Lower lobe of right lung (tissue), 2 donors: ENCODE measurements at regions of chr4 and their contacts with region 1.

Region 1: GRCh38 chr4:183840311-183840710 is 64.8 kb upstream of the STOX2 start:
- DNase-seq: peak; percentile 81
- ATAC-seq: peak; percentile 86 to 91
- H3K4me3 ChIP-seq: no peak overlapping the region
- H3K27ac ChIP-seq: no peak overlapping the region
- H3K4me1 ChIP-seq: no peaks in the 10 kb centered on the region
- H3K27me3 ChIP-seq: no peaks in the 10 kb centered on the region
- CTCF ChIP-seq: peak; percentile 86

Region 2: GRCh38 chr4:184100297-184100885 is 260.1 kb after region 1 on chr4:
- intact Hi-C with region 1: loop called (anchors 10 kb)
- DNase-seq: peak; percentile 80
- ATAC-seq: peak; percentile 45 to 77
- H3K4me3 ChIP-seq: no peak overlapping the region
- H3K27ac ChIP-seq: no peak overlapping the region
- H3K4me1 ChIP-seq: peaks cover 29% of the 10 kb centered on the region
- H3K27me3 ChIP-seq: no peaks in the 10 kb centered on the region
- CTCF ChIP-seq: peak; percentile 90

Region 3: DNA sequence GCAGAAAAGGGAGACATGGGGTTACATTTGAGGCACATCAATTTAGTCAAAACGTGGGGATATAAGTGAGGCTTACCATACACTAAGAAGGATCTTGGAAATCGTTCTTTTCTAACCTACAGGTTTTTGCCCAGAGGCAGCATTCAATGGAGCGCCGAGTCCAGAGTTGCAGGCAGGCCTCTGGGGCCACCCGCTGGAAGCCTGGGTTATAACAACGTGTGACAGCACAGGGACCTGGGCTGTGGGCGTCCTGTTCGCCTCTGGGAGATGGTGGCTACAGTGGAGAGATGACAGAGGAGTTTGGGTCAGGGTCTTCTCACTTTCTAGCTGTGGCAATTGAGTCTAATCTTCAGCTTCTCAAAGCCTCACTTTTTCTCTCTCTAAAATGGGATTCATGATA is 323.5 kb after region 1 on chr4:
- intact Hi-C with region 1: loop called (anchors 5 kb)
- DNase-seq: peak; percentile 73
- ATAC-seq: peak; percentile 83 to 93
- H3K4me3 ChIP-seq: no peak overlapping the region
- H3K27ac ChIP-seq: no peak overlapping the region
- H3K4me1 ChIP-seq: peaks cover 9% of the 10 kb centered on the region
- H3K27me3 ChIP-seq: no peaks in the 10 kb centered on the region
- CTCF ChIP-seq: peak; percentile 63